ENCODE measurements at regions of chr2 and their contacts with region 1.

Region 1: GRCh38 chr2:98385050-98385699 is 38.9 kb downstream of the CNGA3 start:
- DNase-seq: peak; percentile 85
- H3K4me3 ChIP-seq: no peak overlapping the region; a peak in 1 of 4 replicates
- H3K27ac ChIP-seq: no peak overlapping the region
- H3K4me1 ChIP-seq: peaks cover 0 to 2% of the 10 kb centered on the region in 2 experiments; a peak in 1 of 4 replicates
- H3K27me3 ChIP-seq: peaks cover 4% of the 10 kb centered on the region; the same call in 1 of the 2 replicates
- CTCF ChIP-seq: peak; percentile 95
- EP300 ChIP-seq: no peak
- RAD21 ChIP-seq: peak; percentile 99

Region 2: GRCh38 chr2:97697252-97698235 is 687.6 kb before region 1 on chr2:
- CTCF ChIA-PET with region 1: interaction called, 59 read pairs
- POLR2A ChIA-PET with region 1: no interaction called
- DNase-seq: peak; percentile 78
- H3K4me3 ChIP-seq: peak overlapping the region in 1 of 2 experiments; percentile 33; a peak in 1 of 4 replicates
- H3K27ac ChIP-seq: no peak overlapping the region
- H3K4me1 ChIP-seq: no peaks in the 10 kb centered on the region; a peak in 1 of 4 replicates
- H3K27me3 ChIP-seq: no peaks in the 10 kb centered on the region
- CTCF ChIP-seq: peak; percentile 96
- EP300 ChIP-seq: no peak
- RAD21 ChIP-seq: peak; percentile 99

Region 3: DNA sequence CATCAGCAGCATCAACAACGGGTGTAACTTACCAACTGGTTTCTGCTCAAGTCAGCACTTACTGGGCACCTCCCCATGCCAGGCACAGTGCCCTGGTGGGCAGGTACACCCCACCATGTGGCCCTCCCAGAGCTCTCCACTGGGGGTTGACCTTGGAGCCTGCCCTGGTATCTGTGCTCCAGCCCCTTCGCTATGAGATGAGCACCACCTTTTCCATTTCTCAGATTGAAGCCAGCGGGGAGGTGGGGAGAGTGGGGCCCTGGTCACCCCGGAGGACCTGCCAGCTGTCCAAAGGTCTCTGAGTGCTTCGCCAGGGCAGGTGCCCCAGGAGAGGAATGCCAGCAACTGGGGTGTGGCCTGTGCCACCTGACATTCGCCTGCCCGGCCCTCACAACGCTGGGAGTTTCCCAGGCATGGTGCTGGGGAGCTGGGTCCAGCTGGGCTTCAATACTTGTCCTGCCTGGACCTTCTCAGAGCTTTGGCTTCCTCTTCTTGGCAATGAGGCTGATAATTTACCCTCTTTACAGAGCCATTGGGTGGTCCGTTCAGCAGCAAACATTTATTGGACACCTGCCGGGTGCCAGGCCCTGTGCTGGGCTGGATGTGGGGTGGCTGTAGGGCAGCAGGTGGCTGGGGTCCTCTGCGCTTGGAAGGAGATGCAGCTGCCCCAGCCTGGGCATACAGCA is 677.7 kb before region 1 on chr2:
- CTCF ChIA-PET with region 1: interaction called, 11 read pairs
- POLR2A ChIA-PET with region 1: no interaction called
- DNase-seq: no peak
- H3K4me3 ChIP-seq: no peak overlapping the region
- H3K27ac ChIP-seq: no peak overlapping the region
- H3K4me1 ChIP-seq: peaks cover 0 to 5% of the 10 kb centered on the region in 2 experiments; a peak in 1 of 4 replicates
- H3K27me3 ChIP-seq: no peaks in the 10 kb centered on the region
- CTCF ChIP-seq: no peak
- EP300 ChIP-seq: no peak
- RAD21 ChIP-seq: no peak

Region 4: GRCh38 chr2:97806738-97807618 is 578.2 kb before region 1 on chr2:
- CTCF ChIA-PET with region 1: interaction called, 36 read pairs
- POLR2A ChIA-PET with region 1: no interaction called
- DNase-seq: peak; percentile 74
- H3K4me3 ChIP-seq: no peak overlapping the region; a peak in 1 of 4 replicates
- H3K27ac ChIP-seq: no peak overlapping the region
- H3K4me1 ChIP-seq: no peaks in the 10 kb centered on the region
- H3K27me3 ChIP-seq: no peaks in the 10 kb centered on the region
- CTCF ChIP-seq: peak; percentile 92
- EP300 ChIP-seq: no peak
- RAD21 ChIP-seq: peak; percentile 95

Region 5: DNA sequence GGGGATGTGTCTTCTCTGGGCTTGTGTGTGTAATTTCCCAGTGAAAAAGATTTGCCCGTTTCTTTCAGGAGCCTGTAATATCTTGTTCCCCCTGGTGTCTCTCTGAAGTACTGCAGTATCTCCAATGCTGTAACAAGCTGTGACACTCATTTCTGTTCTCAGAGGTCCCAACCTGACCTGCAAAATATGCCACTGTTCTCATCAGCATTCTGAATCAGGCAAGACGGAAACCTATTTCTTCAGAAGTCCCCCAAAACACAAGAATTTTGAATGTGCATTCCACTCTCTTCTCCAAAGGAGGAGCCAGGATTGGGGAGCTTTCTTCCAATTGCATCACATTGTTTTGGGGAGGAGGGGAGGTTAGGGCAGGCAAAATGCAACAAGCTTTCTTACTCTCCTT is 115.9 kb before region 1 on chr2:
- CTCF ChIA-PET with region 1: interaction called, 13 read pairs
- POLR2A ChIA-PET with region 1: no interaction called
- DNase-seq: peak; percentile 61
- H3K4me3 ChIP-seq: no peak overlapping the region; a peak in 1 of 4 replicates
- H3K27ac ChIP-seq: no peak overlapping the region
- H3K4me1 ChIP-seq: no peaks in the 10 kb centered on the region
- H3K27me3 ChIP-seq: no peaks in the 10 kb centered on the region; the same call in 1 of the 2 replicates
- CTCF ChIP-seq: peak; percentile 67
- EP300 ChIP-seq: no peak
- RAD21 ChIP-seq: peak; percentile 79

Region 6: DNA sequence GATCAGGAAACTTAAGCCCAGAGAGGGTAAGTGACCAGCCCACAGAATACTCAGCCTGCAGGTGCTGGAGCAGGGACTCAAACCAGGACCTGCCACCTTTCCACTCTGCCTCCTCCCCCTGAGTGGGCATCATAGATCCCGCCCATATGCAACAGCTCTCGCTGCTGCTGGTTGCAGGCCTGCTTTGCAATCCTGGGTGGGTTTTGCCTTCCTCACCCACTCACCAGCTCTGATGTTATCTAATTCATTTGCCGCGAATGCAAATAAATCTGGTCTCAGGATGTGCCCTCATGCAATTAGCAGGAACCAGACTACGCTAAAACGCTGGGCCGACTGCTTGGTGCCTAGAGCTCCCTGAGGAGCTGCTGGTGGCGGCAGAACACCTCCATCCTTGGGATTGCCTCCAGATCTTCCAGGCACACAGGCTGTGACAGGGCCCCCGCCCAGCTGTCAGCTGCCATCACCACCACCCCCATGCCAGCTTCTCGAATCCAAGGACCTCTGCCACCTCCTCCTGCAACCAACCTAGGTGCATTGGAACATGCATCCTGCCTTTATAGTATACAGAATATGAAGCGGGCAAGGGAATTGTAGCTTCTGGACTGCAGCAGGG is 10.1 kb before region 1 on chr2:
- CTCF ChIA-PET with region 1: interaction called, 11 read pairs
- POLR2A ChIA-PET with region 1: no interaction called
- DNase-seq: peak; percentile 44
- H3K4me3 ChIP-seq: no peak overlapping the region
- H3K27ac ChIP-seq: no peak overlapping the region
- H3K4me1 ChIP-seq: peaks cover 0 to 9% of the 10 kb centered on the region in 2 experiments; a peak in 1 of 4 replicates
- H3K27me3 ChIP-seq: peaks cover 40% of the 10 kb centered on the region; the same call in 1 of the 2 replicates
- CTCF ChIP-seq: no peak
- EP300 ChIP-seq: no peak
- RAD21 ChIP-seq: no peak

Region 7: DNA sequence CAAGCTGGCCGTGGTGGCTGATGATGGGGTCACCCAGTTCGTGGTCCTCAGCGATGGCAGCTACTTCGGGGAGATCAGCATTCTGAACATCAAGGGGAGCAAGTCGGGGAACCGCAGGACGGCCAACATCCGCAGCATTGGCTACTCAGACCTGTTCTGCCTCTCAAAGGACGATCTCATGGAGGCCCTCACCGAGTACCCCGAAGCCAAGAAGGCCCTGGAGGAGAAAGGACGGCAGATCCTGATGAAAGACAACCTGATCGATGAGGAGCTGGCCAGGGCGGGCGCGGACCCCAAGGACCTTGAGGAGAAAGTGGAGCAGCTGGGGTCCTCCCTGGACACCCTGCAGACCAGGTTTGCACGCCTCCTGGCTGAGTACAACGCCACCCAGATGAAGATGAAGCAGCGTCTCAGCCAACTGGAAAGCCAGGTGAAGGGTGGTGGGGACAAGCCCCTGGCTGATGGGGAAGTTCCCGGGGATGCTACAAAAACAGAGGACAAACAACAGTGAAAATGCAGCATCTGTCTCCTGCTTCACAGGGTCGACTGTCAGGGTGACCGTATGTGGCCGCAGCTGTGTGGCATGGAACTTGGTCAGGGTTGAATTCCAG is 11.7 kb after region 1 on chr2:
- CTCF ChIA-PET with region 1: interaction called, 22 read pairs
- POLR2A ChIA-PET with region 1: no interaction called
- DNase-seq: no peak
- H3K4me3 ChIP-seq: no peak overlapping the region
- H3K27ac ChIP-seq: no peak overlapping the region
- H3K4me1 ChIP-seq: no peaks in the 10 kb centered on the region
- H3K27me3 ChIP-seq: no peaks in the 10 kb centered on the region; the same call in 1 of the 2 replicates
- CTCF ChIP-seq: no peak
- EP300 ChIP-seq: no peak
- RAD21 ChIP-seq: no peak

Region 8: DNA sequence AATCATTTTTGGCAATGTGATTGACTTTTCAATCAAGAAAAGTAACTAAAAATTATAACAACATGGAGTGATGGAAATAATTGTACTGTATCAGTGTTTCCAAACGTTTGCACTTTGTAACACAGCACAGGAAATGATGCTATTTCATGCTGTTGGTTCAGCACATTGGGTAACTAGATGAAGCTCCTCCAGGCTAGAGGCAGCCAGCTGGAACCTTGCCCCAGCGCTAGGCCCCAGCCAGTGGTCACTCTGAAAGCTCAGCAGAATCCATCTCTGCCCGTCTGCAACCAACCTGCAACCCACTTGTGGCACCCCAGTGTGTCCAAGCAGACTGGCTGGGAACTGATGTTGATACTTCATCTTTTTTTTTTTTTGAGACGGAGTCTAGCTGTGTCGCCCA is 238.5 kb after region 1 on chr2:
- CTCF ChIA-PET with region 1: no interaction called
- POLR2A ChIA-PET with region 1: no interaction called
- DNase-seq: no peak
- H3K4me3 ChIP-seq: no peak overlapping the region
- H3K27ac ChIP-seq: no peak overlapping the region
- H3K4me1 ChIP-seq: no peaks in the 10 kb centered on the region; a peak in 1 of 4 replicates
- H3K27me3 ChIP-seq: no peaks in the 10 kb centered on the region
- CTCF ChIP-seq: no peak
- EP300 ChIP-seq: no peak
- RAD21 ChIP-seq: no peak

Region 9: DNA sequence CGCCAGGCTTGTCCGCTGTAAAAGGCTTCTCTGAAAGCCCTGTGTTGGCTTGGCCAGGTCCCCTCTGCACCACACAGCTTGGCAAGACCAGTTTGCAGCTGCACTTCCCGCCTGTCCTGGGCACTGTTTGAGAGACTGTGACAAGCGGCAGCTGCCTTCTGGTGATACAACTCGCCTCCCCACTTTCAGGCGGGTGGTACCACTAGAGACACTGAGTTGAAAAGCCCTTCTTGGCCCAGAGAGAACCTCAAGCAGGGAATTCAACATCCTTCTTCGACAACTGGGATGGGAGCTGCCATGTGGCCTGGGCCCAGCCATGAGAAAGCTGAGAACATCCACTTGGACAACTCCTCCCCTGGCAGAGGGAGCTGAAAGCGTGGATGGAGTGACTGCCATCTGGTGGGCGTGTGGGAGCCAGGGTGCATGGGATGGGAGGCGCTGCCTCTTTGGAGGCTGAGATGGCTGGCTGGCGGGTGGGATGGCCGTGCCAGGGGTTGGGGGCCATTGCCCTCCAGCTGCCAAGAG is 1230.1 kb after region 1 on chr2:
- CTCF ChIA-PET with region 1: no interaction called
- POLR2A ChIA-PET with region 1: no interaction called
- DNase-seq: no peak
- H3K4me3 ChIP-seq: no peak overlapping the region
- H3K27ac ChIP-seq: no peak overlapping the region
- H3K4me1 ChIP-seq: peaks cover 0 to 9% of the 10 kb centered on the region in 2 experiments; a peak in 2 of 4 replicates
- H3K27me3 ChIP-seq: no peaks in the 10 kb centered on the region
- CTCF ChIP-seq: peak; percentile 20; the same call in 1 of the 2 replicates
- EP300 ChIP-seq: no peak
- RAD21 ChIP-seq: 0 out of 2 replicates have a peak, but pooled peaks have one; percentile 4